ENCODE measurements at regions of chr15 and their contacts with region 1.

Region 1: GRCh38 chr15:83061680-83062079 is 5.4 kb downstream of the BTBD1 start:
- DNase-seq: no peak
- ATAC-seq: peak; percentile 4; the same call in 2 of the 3 replicates
- H3K4me3 ChIP-seq: peak overlapping the region; percentile 96
- H3K27ac ChIP-seq: peak overlapping the region; percentile 0; the same call in 1 of the 2 replicates
- H3K4me1 ChIP-seq: peaks cover 14% of the 10 kb centered on the region
- H3K27me3 ChIP-seq: no peaks in the 10 kb centered on the region
- CTCF ChIP-seq: no peak
- EP300 ChIP-seq: no peak
- POLR2A ChIP-seq: no peak
- RAD21 ChIP-seq: no peak

Region 2: GRCh38 chr15:83030021-83030420 is 31.7 kb before region 1 on chr15:
- CTCF ChIA-PET with region 1: no interaction called
- POLR2A ChIA-PET with region 1: interaction called, 11 read pairs
- RAD21 ChIA-PET with region 1: no interaction called
- SMC1A ChIA-PET with region 1: interaction called, 3 read pairs
- in situ Hi-C with region 1: no loop called
- intact Hi-C with region 1: no loop called
- DNase-seq: no peak
- ATAC-seq: no peak
- H3K4me3 ChIP-seq: no peak overlapping the region
- H3K27ac ChIP-seq: no peak overlapping the region
- H3K4me1 ChIP-seq: no peaks in the 10 kb centered on the region
- H3K27me3 ChIP-seq: no peaks in the 10 kb centered on the region
- CTCF ChIP-seq: no peak
- EP300 ChIP-seq: no peak
- POLR2A ChIP-seq: no peak
- RAD21 ChIP-seq: no peak

Region 3: DNA sequence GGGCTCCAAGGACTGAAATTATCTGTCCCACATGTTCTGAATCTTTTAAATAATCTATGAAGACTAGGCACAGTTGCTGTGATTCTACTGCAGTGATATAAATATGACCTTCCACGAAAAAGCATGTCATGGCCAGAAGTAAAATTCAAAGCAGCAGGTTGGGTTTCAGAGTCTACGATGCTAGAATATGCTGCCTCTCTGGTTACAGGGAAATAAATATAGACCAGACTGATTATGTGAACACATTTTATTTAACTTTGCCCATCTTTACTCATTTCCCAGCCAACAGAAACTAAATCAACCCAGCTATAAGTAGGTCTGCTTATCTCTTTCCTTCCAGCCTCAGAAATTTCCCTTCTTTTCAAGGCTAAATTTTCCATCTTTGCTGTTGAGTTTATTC is 25.9 kb after region 1 on chr15:
- CTCF ChIA-PET with region 1: no interaction called
- POLR2A ChIA-PET with region 1: no interaction called
- RAD21 ChIA-PET with region 1: no interaction called
- SMC1A ChIA-PET with region 1: no interaction called
- in situ Hi-C with region 1: no loop called
- intact Hi-C with region 1: no loop called
- DNase-seq: no peak
- ATAC-seq: no peak
- H3K4me3 ChIP-seq: no peak overlapping the region
- H3K27ac ChIP-seq: no peak overlapping the region
- H3K4me1 ChIP-seq: peaks cover 6% of the 10 kb centered on the region
- H3K27me3 ChIP-seq: no peaks in the 10 kb centered on the region; a peak in 1 of 4 replicates
- CTCF ChIP-seq: no peak
- EP300 ChIP-seq: no peak
- POLR2A ChIP-seq: no peak
- RAD21 ChIP-seq: no peak

Region 4: GRCh38 chr15:83207622-83208411 is 146.1 kb after region 1 on chr15 and contains the start of gene HDGFL3:
- CTCF ChIA-PET with region 1: interaction called, 4 read pairs
- POLR2A ChIA-PET with region 1: interaction called, 4 read pairs
- RAD21 ChIA-PET with region 1: interaction called, 8 read pairs
- SMC1A ChIA-PET with region 1: interaction called, 11 read pairs
- in situ Hi-C with region 1: no loop called
- intact Hi-C with region 1: no loop called
- DNase-seq: no peak
- ATAC-seq: peak; percentile 64
- H3K4me3 ChIP-seq: peak within 1 kb of the TSS; percentile 94
- H3K27ac ChIP-seq: peak within 1 kb of the TSS; percentile 80
- H3K4me1 ChIP-seq: peaks cover 6% of the 10 kb centered on the region; the same call in 1 of the 2 replicates
- H3K27me3 ChIP-seq: no peaks in the 10 kb centered on the region
- CTCF ChIP-seq: peak; percentile 44 to 49 (median 46); a peak in 5 of 6 replicates
- EP300 ChIP-seq: no peak
- POLR2A ChIP-seq: peak; percentile 79
- RAD21 ChIP-seq: peak; percentile 53
- polyA plus RNA-seq, gene HDGFL3: 5.6 to 6.6 TPM

Measured in GM12878 (cell line).